ENCODE measurements at regions of chr15 and their contacts with region 1.

Region 1: GRCh38 chr15:27179789-27180188 is 208.8 kb downstream of the GABRG3 start:
- DNase-seq: no peak
- H3K4me3 ChIP-seq: no peak overlapping the region
- H3K27ac ChIP-seq: no peak overlapping the region
- H3K4me1 ChIP-seq: no peaks in the 10 kb centered on the region
- H3K27me3 ChIP-seq: no peaks in the 10 kb centered on the region
- CTCF ChIP-seq: no peak
- POLR2A ChIP-seq: no peak

Region 2: DNA sequence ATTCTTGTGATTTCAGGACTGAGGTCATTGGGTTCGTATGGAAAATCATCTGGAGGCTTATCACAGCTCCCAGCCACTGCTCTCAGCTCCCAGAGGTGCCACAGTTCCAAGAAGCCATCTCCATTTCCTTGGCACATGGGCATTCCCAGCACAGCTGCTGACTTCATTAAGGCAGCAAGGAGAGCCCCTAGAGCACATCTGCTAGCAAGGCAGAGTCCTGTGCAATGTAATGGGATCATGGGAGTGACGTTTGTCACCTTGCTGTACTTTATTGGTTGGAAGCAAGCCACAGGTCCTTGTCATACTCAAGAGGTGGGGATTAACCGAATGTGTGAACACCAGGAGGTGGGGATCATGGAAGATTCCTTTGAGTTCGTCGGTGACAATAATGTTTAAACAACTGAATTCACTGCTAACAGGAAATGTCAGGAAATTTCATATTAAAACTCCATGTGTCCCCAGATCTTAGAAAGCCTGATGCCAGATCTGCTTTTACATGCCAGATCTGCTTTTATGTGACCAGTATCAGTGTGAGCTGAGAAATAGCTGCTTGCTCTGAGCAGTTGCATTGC is 60.0 kb before region 1 on chr15:
- intact Hi-C with region 1: loop called (anchors 10 kb)
- DNase-seq: no peak
- H3K4me3 ChIP-seq: no peak overlapping the region
- H3K27ac ChIP-seq: no peak overlapping the region
- H3K4me1 ChIP-seq: peaks cover 0 to 5% (median 0%) of the 10 kb centered on the region in 6 donors
- H3K27me3 ChIP-seq: peaks cover 0 to 12% (median 0%) of the 10 kb centered on the region in 7 donors
- CTCF ChIP-seq: no peak
- POLR2A ChIP-seq: no peak

Region 3: GRCh38 chr15:27399241-27399640 is 219.5 kb after region 1 on chr15:
- intact Hi-C with region 1: no loop called
- DNase-seq: no peak
- H3K4me3 ChIP-seq: no peak overlapping the region
- H3K27ac ChIP-seq: no peak overlapping the region
- H3K4me1 ChIP-seq: no peaks in the 10 kb centered on the region
- H3K27me3 ChIP-seq: no peaks in the 10 kb centered on the region
- CTCF ChIP-seq: no peak
- POLR2A ChIP-seq: no peak